ENCODE measurements at regions of chr3 and their contacts with region 1.

Region 1: GRCh38 chr3:104291437-104291851 is 1075.3 kb upstream of the ALCAM start:
- DNase-seq: no peak
- ATAC-seq: peak; percentile 47
- H3K4me3 Mint-ChIP-seq: peak overlapping the region; percentile 48
- H3K27ac Mint-ChIP-seq: peak overlapping the region; percentile 31
- H3K4me1 Mint-ChIP-seq: peaks cover 16% of the 10 kb centered on the region
- H3K27me3 Mint-ChIP-seq: no peaks in the 10 kb centered on the region
- CTCF ChIP-seq: no peak

Region 2: DNA sequence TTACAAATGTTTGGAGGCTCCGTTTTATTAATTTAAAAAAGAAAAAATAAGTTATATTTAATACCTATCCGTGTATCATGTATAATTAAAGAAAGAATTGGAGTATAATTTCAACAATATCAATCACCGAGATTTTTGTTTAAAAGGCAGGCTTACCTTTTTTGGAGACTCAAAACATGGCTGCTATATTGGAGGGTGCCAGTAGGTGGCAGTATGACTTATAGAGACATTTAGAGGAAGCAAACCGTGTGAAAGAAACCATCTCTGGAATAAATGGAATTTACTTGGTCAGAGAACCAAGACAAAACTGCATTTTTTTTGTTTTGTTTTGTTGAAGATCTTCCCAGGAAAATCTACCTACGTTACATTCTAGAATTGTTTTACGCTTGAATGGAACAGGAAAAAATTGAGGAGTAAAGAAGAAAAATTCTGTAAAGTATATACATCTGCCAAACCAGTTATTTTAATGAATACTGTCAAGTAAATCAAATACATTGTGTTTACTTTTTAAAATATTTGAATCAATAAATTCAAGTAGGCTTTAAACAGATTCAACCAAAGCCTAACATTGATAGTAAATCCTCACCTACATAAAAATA is 272.7 kb after region 1 on chr3:
- CTCF ChIA-PET with region 1: no interaction called
- POLR2A ChIA-PET with region 1: no interaction called
- intact Hi-C with region 1: loop called (anchors 10 kb)
- DNase-seq: no peak
- ATAC-seq: no peak
- H3K4me3 Mint-ChIP-seq: no peak overlapping the region
- H3K27ac Mint-ChIP-seq: no peak overlapping the region
- H3K4me1 Mint-ChIP-seq: peaks cover 8% of the 10 kb centered on the region
- H3K27me3 Mint-ChIP-seq: no peaks in the 10 kb centered on the region
- CTCF ChIP-seq: peak; percentile 64